Activated T-helper 2 cell treated with anti-CD3 and anti-CD28 coated beads, Interferon-gamma antibody, Interleukin-2, Interleukin-4, amounts not matched to agents 10 μg/mL and 5 μg/mL and 100 μg/mL, durations not matched to agents 14 hours and 24 hours and 36 hours (primary cell): ENCODE measurements at regions of chr4 and their contacts with region 1.

Region 1: GRCh38 chr4:22500831-22501719 is 14.8 kb downstream of the ADGRA3 start:
- DNase-seq: no peak
- H3K4me3 Mint-ChIP-seq: peak overlapping the region; percentile 34
- H3K27ac Mint-ChIP-seq: peak overlapping the region; percentile 75
- H3K4me1 Mint-ChIP-seq: peaks cover 34% of the 10 kb centered on the region
- H3K27me3 Mint-ChIP-seq: no peaks in the 10 kb centered on the region

Region 2: DNA sequence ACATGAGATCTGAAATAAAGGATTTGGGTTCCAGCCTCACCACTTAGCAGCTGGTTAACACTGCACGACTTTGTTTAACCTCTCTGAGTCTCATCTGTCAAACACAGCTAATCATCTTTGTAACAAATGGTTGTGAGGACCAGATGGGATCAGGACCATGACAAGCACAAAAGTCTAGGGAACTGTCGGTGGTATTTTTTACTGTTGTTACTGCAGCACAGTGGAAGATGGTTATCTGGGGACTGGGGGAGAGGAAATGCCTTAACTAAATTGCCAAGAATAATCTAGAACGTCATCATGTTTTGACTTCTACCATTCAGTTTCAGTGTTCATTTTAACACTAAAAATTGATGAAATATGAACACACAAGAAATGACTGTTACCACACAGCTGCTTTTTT is 84.7 kb before region 1 on chr4:
- intact Hi-C with region 1: loop called (anchors 2 kb)
- DNase-seq: no peak
- H3K4me3 Mint-ChIP-seq: peak overlapping the region; percentile 53
- H3K27ac Mint-ChIP-seq: peak overlapping the region; percentile 73
- H3K4me1 Mint-ChIP-seq: peaks cover 35% of the 10 kb centered on the region
- H3K27me3 Mint-ChIP-seq: no peaks in the 10 kb centered on the region

Region 3: DNA sequence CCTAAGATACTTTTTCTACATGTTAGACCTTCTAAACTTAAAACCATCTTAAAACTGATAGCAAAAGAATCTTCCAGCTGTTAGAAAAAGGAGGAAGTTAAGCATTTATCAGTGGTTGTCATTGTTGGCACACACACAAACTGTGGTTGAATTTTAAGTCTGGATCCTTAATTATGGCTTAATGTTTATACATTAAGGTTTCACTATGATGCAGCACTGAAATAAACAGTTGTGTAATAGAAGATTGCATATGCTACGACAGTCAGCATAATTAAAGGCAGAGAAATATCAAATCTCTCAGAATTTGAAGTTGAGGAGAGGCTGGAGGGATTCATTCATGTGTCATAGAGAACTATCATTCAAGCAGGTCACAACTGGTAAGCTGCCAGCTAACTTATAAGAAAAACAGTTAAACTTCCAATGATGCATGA is 17.5 kb before region 1 on chr4:
- intact Hi-C with region 1: loop called (anchors 2 kb)
- DNase-seq: no peak
- H3K4me3 Mint-ChIP-seq: no peak overlapping the region
- H3K27ac Mint-ChIP-seq: no peak overlapping the region
- H3K4me1 Mint-ChIP-seq: peaks cover 34% of the 10 kb centered on the region
- H3K27me3 Mint-ChIP-seq: no peaks in the 10 kb centered on the region

Region 4: GRCh38 chr4:22595684-22596083 is 94.6 kb after region 1 on chr4:
- intact Hi-C with region 1: loop called (anchors 5 kb)
- DNase-seq: no peak
- H3K4me3 Mint-ChIP-seq: peak overlapping the region; percentile 7
- H3K27ac Mint-ChIP-seq: peak overlapping the region; percentile 59
- H3K4me1 Mint-ChIP-seq: peaks cover 18% of the 10 kb centered on the region
- H3K27me3 Mint-ChIP-seq: no peaks in the 10 kb centered on the region

Region 5: DNA sequence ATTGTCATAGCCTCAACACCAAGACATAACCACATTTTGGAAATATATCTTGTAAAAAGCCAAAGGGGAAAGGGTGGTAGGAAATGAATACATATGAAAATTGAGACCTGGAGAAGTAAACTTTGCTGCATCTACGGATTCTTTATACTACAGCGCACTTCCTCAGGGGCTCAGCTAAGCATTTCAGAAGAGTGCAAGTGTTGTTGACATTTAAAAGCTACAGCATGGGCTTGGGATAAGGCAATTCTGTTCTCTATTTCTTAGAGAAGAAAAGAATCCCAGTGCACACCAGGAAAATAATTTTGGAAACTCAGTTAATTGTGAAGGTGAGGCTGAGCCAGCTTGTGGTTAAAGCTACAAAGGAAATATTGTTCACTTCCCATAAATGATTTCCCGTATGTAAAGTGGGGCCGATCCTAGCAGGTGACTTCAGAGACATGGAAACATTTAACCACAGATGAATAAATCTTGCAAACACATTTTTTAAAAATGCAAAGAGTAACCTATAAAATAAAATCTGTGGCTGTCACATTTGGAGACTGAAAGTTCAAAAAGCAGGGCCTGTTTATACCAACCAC is 179.1 kb after region 1 on chr4:
- intact Hi-C with region 1: no loop called
- DNase-seq: no peak
- H3K4me3 Mint-ChIP-seq: no peak overlapping the region
- H3K27ac Mint-ChIP-seq: no peak overlapping the region
- H3K4me1 Mint-ChIP-seq: peaks cover 16% of the 10 kb centered on the region
- H3K27me3 Mint-ChIP-seq: no peaks in the 10 kb centered on the region

Region 6: GRCh38 chr4:23171976-23172375 is 670.9 kb after region 1 on chr4:
- intact Hi-C with region 1: no loop called
- DNase-seq: no peak
- H3K4me3 Mint-ChIP-seq: no peak overlapping the region
- H3K27ac Mint-ChIP-seq: no peak overlapping the region
- H3K4me1 Mint-ChIP-seq: no peaks in the 10 kb centered on the region
- H3K27me3 Mint-ChIP-seq: no peaks in the 10 kb centered on the region

Region 7: GRCh38 chr4:23333946-23334878 is 833.1 kb after region 1 on chr4:
- intact Hi-C with region 1: loop called (anchors 5 kb)
- DNase-seq: peak; percentile 56
- H3K4me3 Mint-ChIP-seq: peak overlapping the region; percentile 47
- H3K27ac Mint-ChIP-seq: peak overlapping the region; percentile 76
- H3K4me1 Mint-ChIP-seq: peaks cover 30% of the 10 kb centered on the region
- H3K27me3 Mint-ChIP-seq: peaks cover 5% of the 10 kb centered on the region